Right lobe of liver (tissue), 6 donors: ENCODE measurements at regions of chr14 and their contacts with region 1.

Region 1: GRCh38 chr14:105366386-105367074 is 31.8 kb upstream of the TEX22 start:
- DNase-seq: no peak
- ATAC-seq: no peak
- H3K4me3 ChIP-seq: no peak overlapping the region
- H3K27ac ChIP-seq: no peak overlapping the region
- H3K4me1 ChIP-seq: no peaks in the 10 kb centered on the region
- H3K27me3 ChIP-seq: no peaks in the 10 kb centered on the region
- CTCF ChIP-seq: no peak
- POLR2A ChIP-seq: no peak

Region 2: GRCh38 chr14:105489542-105490266 is 123.2 kb after region 1 on chr14:
- intact Hi-C with region 1: loop called in 1 of 2 experiments (anchors 5 kb)
- DNase-seq: peak; percentile 81 to 87 (median 85)
- ATAC-seq: peak; percentile 10 to 38 (median 26)
- H3K4me3 ChIP-seq: peak overlapping the region; percentile 53 to 62 (median 58)
- H3K27ac ChIP-seq: peak overlapping the region; percentile 68 to 91 (median 83)
- H3K4me1 ChIP-seq: peaks cover 0 to 28% (median 9%) of the 10 kb centered on the region in 4 donors
- H3K27me3 ChIP-seq: no peaks in the 10 kb centered on the region
- CTCF ChIP-seq: peak; percentile 58 to 64 (median 62)
- POLR2A ChIP-seq: no peak